Naive thymus-derived CD4-positive, alpha-beta T cell (primary cell): ENCODE measurements at regions of chr19 and their contacts with region 1.

Region 1: GRCh38 chr19:57947208-57948134 is at the start of gene ZNF256:
- DNase-seq: peak; percentile 55 to 85 (median 77)
- ATAC-seq: peak; percentile 97
- H3K4me3 ChIP-seq: peak within 1 kb of the TSS; percentile 71
- H3K4me3 Mint-ChIP-seq: peak within 1 kb of the TSS; percentile 89 to 97 (median 95)
- H3K27ac ChIP-seq: peak within 1 kb of the TSS; percentile 80
- H3K27ac Mint-ChIP-seq: peak within 1 kb of the TSS; percentile 83 to 97 (median 92)
- H3K4me1 ChIP-seq: peaks cover 6 to 9% of the 10 kb centered on the region in 2 donors
- H3K4me1 Mint-ChIP-seq: peaks cover 10 to 28% (median 21%) of the 10 kb centered on the region in 7 donors
- H3K27me3 ChIP-seq: no peaks in the 10 kb centered on the region
- H3K27me3 Mint-ChIP-seq: peaks cover 0 to 4% (median 0%) of the 10 kb centered on the region in 5 donors
- total RNA-seq, gene ZNF256: 5.2 to 13.8 (median 11.8) TPM

Region 2: GRCh38 chr19:57746580-57747471 is 200.6 kb before region 1 on chr19 and contains the start of gene ZNF776:
- CTCF ChIA-PET with region 1: no interaction called
- POLR2A ChIA-PET with region 1: no interaction called
- intact Hi-C with region 1: loop called in 1 of 2 experiments (anchors 5 kb)
- DNase-seq: peak; percentile 40 to 90 (median 84)
- ATAC-seq: peak; percentile 99
- H3K4me3 ChIP-seq: peak within 1 kb of the TSS; percentile 86
- H3K4me3 Mint-ChIP-seq: peak within 1 kb of the TSS; percentile 91 to 99 (median 94)
- H3K27ac ChIP-seq: peak within 1 kb of the TSS; percentile 85
- H3K27ac Mint-ChIP-seq: peak within 1 kb of the TSS; percentile 81 to 99 (median 94)
- H3K4me1 ChIP-seq: peaks cover 6 to 16% of the 10 kb centered on the region in 2 donors
- H3K4me1 Mint-ChIP-seq: peaks cover 13 to 40% (median 26%) of the 10 kb centered on the region in 7 donors
- H3K27me3 ChIP-seq: no peaks in the 10 kb centered on the region
- H3K27me3 Mint-ChIP-seq: no peaks in the 10 kb centered on the region
- total RNA-seq, gene ZNF776: 18.9 to 52.3 (median 21.8) TPM

Region 3: DNA sequence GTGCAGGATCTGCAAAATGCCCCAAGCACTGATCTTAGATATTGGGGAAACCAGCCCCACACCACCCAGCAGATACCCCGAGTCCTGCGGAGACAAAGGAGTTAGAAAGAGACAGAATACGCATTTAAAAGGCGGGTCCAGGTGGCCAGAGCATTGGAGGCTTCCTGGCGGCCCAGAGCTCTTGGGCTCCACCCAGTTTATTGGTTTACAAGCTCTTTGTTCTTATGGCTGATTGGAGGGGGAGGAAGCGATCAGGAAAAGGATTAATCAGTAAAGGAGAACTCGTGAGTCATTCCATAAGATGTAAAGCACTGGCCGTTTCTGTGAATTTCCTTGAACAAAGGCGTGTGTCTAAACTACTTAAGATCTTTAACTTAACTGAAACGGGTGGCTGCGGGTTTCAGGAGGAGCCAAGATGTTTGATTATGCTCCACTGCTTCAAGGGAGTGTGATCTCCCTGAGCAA is 96.9 kb before region 1 on chr19:
- CTCF ChIA-PET with region 1: no interaction called
- POLR2A ChIA-PET with region 1: no interaction called
- intact Hi-C with region 1: loop called in 1 of 2 experiments (anchors 5 kb)
- DNase-seq: no peak
- ATAC-seq: no peak
- H3K4me3 ChIP-seq: peak overlapping the region; percentile 72
- H3K4me3 Mint-ChIP-seq: peak overlapping the region; percentile 93 to 97 (median 94)
- H3K27ac ChIP-seq: peak overlapping the region; percentile 92
- H3K27ac Mint-ChIP-seq: peak overlapping the region; percentile 90 to 98 (median 95)
- H3K4me1 ChIP-seq: peaks cover 7 to 11% of the 10 kb centered on the region in 2 donors
- H3K4me1 Mint-ChIP-seq: peaks cover 22 to 32% (median 28%) of the 10 kb centered on the region in 7 donors
- H3K27me3 ChIP-seq: no peaks in the 10 kb centered on the region
- H3K27me3 Mint-ChIP-seq: no peaks in the 10 kb centered on the region

Region 4: DNA sequence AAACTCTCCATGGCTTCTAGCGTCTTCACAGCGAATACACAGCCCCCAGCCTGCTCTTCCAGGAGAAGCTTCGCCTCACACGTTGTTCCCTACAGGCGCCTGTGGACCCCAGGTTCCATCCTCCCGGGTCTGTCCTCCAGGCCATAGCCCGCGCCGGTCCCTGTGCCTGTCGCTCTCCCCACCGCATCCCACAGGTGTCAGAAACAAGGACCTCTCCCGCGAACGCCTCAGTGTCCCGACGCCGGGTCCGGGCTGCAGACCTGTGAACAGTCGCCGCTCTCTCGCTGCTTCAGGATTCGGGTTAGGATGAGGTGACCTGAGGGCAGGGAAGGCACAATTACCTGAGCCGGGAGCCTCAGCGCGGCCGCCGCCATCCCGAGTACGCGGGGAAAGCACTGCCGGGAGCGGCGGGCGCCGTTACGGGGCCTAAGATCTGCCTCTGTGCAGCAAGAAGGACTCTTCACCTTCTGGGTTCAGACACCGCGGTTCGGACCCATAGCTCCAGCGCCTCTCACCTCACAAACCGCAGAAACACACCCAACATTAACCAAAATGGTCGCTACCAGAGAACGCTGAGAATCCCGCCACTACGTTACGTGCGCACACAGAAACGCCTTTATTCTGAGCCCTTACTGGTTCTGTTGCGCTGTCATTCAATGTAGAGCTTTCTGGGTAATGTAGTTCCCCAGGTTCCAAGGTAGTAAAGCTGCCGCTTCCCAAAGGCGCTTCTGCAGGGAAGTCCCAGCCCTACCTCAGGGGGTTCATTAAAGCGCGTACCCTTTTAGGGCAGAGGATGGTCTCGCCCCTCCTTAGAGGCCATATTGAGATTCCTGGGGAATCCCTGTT is 12.4 kb before region 1 on chr19 and contains the start of gene ZNF418:
- CTCF ChIA-PET with region 1: no interaction called
- POLR2A ChIA-PET with region 1: no interaction called
- intact Hi-C with region 1: loop called in 1 of 2 experiments (anchors 1 kb)
- DNase-seq: peak in 7 of 9 donors; percentile 7 to 49 (median 42)
- ATAC-seq: peak; percentile 99
- H3K4me3 ChIP-seq: peak within 1 kb of the TSS; percentile 31
- H3K4me3 Mint-ChIP-seq: peak within 1 kb of the TSS; percentile 63 to 88 (median 85)
- H3K27ac ChIP-seq: peak within 1 kb of the TSS; percentile 69
- H3K27ac Mint-ChIP-seq: peak within 1 kb of the TSS in 8 of 9 donors; percentile 51 to 93 (median 85)
- H3K4me1 ChIP-seq: no peaks in the 10 kb centered on the region
- H3K4me1 Mint-ChIP-seq: peaks cover 0 to 9% (median 6%) of the 10 kb centered on the region in 7 donors
- H3K27me3 ChIP-seq: no peaks in the 10 kb centered on the region
- H3K27me3 Mint-ChIP-seq: peaks cover 0 to 17% (median 0%) of the 10 kb centered on the region in 5 donors
- total RNA-seq, gene ZNF418: 2.1 to 7.7 (median 6.0) TPM